Naive thymus-derived CD4-positive, alpha-beta T cell (primary cell): ENCODE measurements at regions of chr1 and their contacts with region 1.

Region 1: DNA sequence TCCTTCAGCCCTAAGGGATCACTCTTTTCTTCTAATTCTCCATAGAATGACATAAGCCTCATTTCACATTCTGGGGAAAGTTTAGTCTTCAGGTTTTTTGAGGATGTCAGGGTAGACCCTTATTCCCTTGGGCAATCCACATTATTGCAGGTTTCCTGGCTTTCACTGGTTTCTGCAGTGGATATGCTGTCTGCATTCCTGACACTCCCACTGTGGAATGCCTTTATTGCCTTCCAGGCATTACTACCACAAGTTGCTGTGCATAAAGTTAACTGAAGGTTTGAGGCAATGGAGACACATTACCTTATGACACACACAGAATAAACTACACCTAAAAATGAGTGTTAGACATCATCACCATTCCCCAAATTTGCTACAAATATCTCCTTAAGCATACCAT is 12.7 kb downstream of the FASLG start:
- DNase-seq: no peak
- ATAC-seq: no peak
- H3K4me3 ChIP-seq: peak overlapping the region; percentile 34
- H3K4me3 Mint-ChIP-seq: peak overlapping the region in 2 of 10 donors; percentile 3 to 66
- H3K27ac ChIP-seq: no peak overlapping the region
- H3K27ac Mint-ChIP-seq: peak overlapping the region in 2 of 9 donors; percentile 20 to 34
- H3K4me1 ChIP-seq: peaks cover 50 to 60% of the 10 kb centered on the region in 2 donors
- H3K4me1 Mint-ChIP-seq: peaks cover 23 to 82% (median 60%) of the 10 kb centered on the region in 7 donors
- H3K27me3 ChIP-seq: no peaks in the 10 kb centered on the region
- H3K27me3 Mint-ChIP-seq: no peaks in the 10 kb centered on the region

Region 2: GRCh38 chr1:172616195-172616970 is 55.2 kb before region 1 on chr1:
- CTCF ChIA-PET with region 1: no interaction called
- POLR2A ChIA-PET with region 1: no interaction called
- intact Hi-C with region 1: no loop called
- DNase-seq: no peak
- ATAC-seq: no peak
- H3K4me3 ChIP-seq: no peak overlapping the region
- H3K4me3 Mint-ChIP-seq: no peak overlapping the region
- H3K27ac ChIP-seq: no peak overlapping the region
- H3K27ac Mint-ChIP-seq: peak overlapping the region in 1 of 9 donors; percentile 5
- H3K4me1 ChIP-seq: no peaks in the 10 kb centered on the region
- H3K4me1 Mint-ChIP-seq: no peaks in the 10 kb centered on the region
- H3K27me3 ChIP-seq: no peaks in the 10 kb centered on the region
- H3K27me3 Mint-ChIP-seq: peaks cover 0 to 2% (median 0%) of the 10 kb centered on the region in 5 donors

Region 3: GRCh38 chr1:172638885-172639831 is 32.4 kb before region 1 on chr1:
- CTCF ChIA-PET with region 1: interaction called, 4 read pairs
- POLR2A ChIA-PET with region 1: interaction called, 4 read pairs
- intact Hi-C with region 1: loop called (anchors 1 to 2 kb)
- DNase-seq: peak; percentile 12 to 85 (median 79)
- ATAC-seq: peak; percentile 87
- H3K4me3 ChIP-seq: peak overlapping the region; percentile 32
- H3K4me3 Mint-ChIP-seq: peak overlapping the region; percentile 46 to 88 (median 78)
- H3K27ac ChIP-seq: peak overlapping the region; percentile 43
- H3K27ac Mint-ChIP-seq: peak overlapping the region; percentile 88 to 94 (median 91)
- H3K4me1 ChIP-seq: peaks cover 63 to 72% of the 10 kb centered on the region in 2 donors
- H3K4me1 Mint-ChIP-seq: peaks cover 54 to 87% (median 81%) of the 10 kb centered on the region in 7 donors
- H3K27me3 ChIP-seq: no peaks in the 10 kb centered on the region
- H3K27me3 Mint-ChIP-seq: peaks cover 0 to 29% (median 0%) of the 10 kb centered on the region in 5 donors

Region 4: GRCh38 chr1:172699111-172699510 is 27.5 kb after region 1 on chr1:
- CTCF ChIA-PET with region 1: no interaction called
- POLR2A ChIA-PET with region 1: no interaction called
- intact Hi-C with region 1: loop called (anchors 1 kb)
- DNase-seq: peak; percentile 13 to 76 (median 65)
- ATAC-seq: peak; percentile 92
- H3K4me3 ChIP-seq: peak overlapping the region; percentile 37
- H3K4me3 Mint-ChIP-seq: peak overlapping the region; percentile 61 to 81 (median 76)
- H3K27ac ChIP-seq: peak overlapping the region; percentile 44
- H3K27ac Mint-ChIP-seq: peak overlapping the region in 7 of 9 donors; percentile 87 to 98 (median 92)
- H3K4me1 ChIP-seq: peaks cover 77 to 80% of the 10 kb centered on the region in 2 donors
- H3K4me1 Mint-ChIP-seq: peaks cover 0 to 53% (median 0%) of the 10 kb centered on the region in 7 donors
- H3K27me3 ChIP-seq: no peaks in the 10 kb centered on the region
- H3K27me3 Mint-ChIP-seq: no peaks in the 10 kb centered on the region

Region 5: DNA sequence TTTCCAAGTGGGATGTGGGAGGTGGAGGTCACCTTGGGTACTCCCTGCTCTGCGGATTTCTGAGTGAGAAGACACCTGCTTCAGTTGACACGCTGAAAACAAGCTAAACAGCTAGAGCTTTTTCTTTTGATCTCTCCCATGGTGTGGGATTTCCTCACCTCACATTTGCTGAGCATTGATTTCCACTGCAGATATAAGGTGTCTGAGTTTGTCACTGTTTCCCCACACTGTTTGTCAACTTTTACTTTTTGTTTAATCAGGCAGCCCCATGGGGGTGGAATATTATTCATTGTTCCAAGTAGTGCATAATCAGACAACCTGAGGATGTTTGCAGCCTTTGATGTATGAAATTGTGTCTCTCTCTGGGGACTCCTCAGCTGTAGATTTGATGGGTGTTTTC is 36.9 kb after region 1 on chr1:
- CTCF ChIA-PET with region 1: interaction called, 3 read pairs
- POLR2A ChIA-PET with region 1: interaction called, 3 read pairs
- intact Hi-C with region 1: loop called (anchors 1 to 2 kb)
- DNase-seq: peak in 7 of 9 donors; percentile 43 to 62 (median 53)
- ATAC-seq: peak; percentile 86
- H3K4me3 ChIP-seq: peak overlapping the region; percentile 7
- H3K4me3 Mint-ChIP-seq: peak overlapping the region; percentile 20 to 73 (median 51)
- H3K27ac ChIP-seq: no peak overlapping the region
- H3K27ac Mint-ChIP-seq: peak overlapping the region in 3 of 9 donors; percentile 31 to 71 (median 43)
- H3K4me1 ChIP-seq: peaks cover 35 to 48% of the 10 kb centered on the region in 2 donors
- H3K4me1 Mint-ChIP-seq: peaks cover 10 to 40% (median 27%) of the 10 kb centered on the region in 7 donors
- H3K27me3 ChIP-seq: no peaks in the 10 kb centered on the region
- H3K27me3 Mint-ChIP-seq: peaks cover 0 to 26% (median 0%) of the 10 kb centered on the region in 5 donors

Region 6: DNA sequence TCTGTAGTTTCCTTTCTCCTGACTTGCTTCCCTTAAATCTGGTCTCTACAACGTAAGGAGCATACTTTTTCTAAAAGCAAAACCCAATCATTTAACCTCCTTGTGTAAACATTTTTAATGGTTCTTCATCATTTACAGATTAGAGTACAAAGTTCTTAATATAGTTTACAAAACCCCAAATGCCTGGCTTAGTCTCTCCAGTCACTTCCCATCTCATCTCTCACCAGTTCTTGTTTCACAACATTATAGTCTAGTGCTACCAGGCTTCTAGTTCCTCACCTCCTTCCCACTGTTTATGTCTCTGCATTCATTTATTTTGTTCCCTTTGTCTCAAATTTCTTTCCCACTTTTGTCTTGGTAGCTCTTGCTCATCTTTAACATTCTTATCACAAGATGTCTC is 155.7 kb after region 1 on chr1:
- CTCF ChIA-PET with region 1: no interaction called
- POLR2A ChIA-PET with region 1: no interaction called
- intact Hi-C with region 1: no loop called
- DNase-seq: no peak
- ATAC-seq: no peak
- H3K4me3 ChIP-seq: no peak overlapping the region
- H3K4me3 Mint-ChIP-seq: no peak overlapping the region
- H3K27ac ChIP-seq: no peak overlapping the region
- H3K27ac Mint-ChIP-seq: no peak overlapping the region
- H3K4me1 ChIP-seq: peaks cover 4 to 11% of the 10 kb centered on the region in 2 donors
- H3K4me1 Mint-ChIP-seq: peaks cover 0 to 6% (median 0%) of the 10 kb centered on the region in 7 donors
- H3K27me3 ChIP-seq: no peaks in the 10 kb centered on the region
- H3K27me3 Mint-ChIP-seq: peaks cover 0 to 35% (median 0%) of the 10 kb centered on the region in 5 donors